ENCODE measurements at regions of chr2 and their contacts with region 1.

Region 1: DNA sequence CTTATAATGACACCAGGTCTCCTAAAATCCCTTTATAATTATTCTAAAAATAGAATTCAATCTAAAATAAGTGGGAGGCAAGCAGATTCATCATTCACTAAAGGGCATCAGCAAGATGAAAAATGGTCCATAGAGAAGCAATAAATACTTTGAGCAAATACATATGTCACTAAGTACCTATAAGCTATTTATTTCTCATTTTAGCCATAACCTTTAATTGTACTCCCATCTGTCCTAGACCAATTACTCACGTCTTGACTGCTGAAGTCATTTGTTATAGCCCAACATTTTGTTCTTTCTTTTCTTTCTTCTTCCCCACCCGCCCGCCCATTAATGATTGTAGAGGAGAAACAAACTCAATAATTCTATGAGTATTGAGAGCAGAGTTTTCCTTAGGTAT is 105.7 kb downstream of the MAP2 start:
- DNase-seq: no peak
- H3K4me3 ChIP-seq: no peak overlapping the region
- H3K27ac ChIP-seq: no peak overlapping the region
- H3K4me1 ChIP-seq: no peaks in the 10 kb centered on the region
- H3K27me3 ChIP-seq: no peaks in the 10 kb centered on the region
- CTCF ChIP-seq: no peak
- EP300 ChIP-seq: no peak
- POLR2A ChIP-seq: no peak

Region 2: GRCh38 chr2:209495855-209496585 is 33.6 kb before region 1 on chr2:
- intact Hi-C with region 1: loop called in 1 of 4 experiments (anchors 2 kb)
- DNase-seq: no peak
- H3K4me3 ChIP-seq: no peak overlapping the region
- H3K27ac ChIP-seq: no peak overlapping the region
- H3K4me1 ChIP-seq: no peaks in the 10 kb centered on the region
- H3K27me3 ChIP-seq: no peaks in the 10 kb centered on the region
- CTCF ChIP-seq: no peak
- EP300 ChIP-seq: peak; percentile 23
- POLR2A ChIP-seq: no peak

Measured in ovary (tissue), 10 donors.